Activated B cell treated with CpG ODN at 0.5 μM for 24 hours (primary cell): ENCODE measurements at regions of chr5 and their contacts with region 1.

Region 1: DNA sequence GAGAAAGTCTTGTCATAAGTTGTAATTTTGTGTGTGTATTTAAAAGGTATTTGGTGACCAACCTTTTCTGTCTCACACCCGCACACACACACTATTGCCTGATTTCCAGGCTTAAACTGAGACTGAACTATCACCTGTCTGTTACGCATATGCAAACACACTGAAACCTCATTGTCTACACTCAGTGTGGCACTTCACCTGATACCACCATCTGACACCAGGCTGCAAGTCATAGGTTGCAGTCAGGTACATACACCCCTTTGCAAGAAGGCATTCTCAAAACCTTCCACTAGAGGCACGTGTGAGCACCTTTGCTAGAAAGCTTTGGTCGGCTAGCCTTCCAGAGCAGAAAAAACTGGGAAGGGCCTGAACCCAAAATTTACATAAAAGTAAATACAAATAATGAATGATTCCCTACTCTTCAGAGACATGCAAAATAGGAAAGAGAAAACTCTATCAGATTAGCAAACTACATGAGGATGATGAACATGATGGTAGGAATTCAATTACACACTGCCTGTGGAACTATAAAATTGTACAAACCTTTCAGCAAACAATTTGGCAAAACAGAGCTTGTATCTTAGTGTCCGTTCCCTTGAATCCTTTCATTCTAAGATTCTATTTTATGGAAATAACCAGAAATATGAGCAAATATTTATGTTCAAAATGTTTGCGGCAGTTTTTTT is 5.9 kb upstream of the FOXD1 start:
- DNase-seq: no peak
- ATAC-seq: peak; percentile 42
- H3K4me3 Mint-ChIP-seq: no peak overlapping the region
- H3K27ac Mint-ChIP-seq: no peak overlapping the region
- H3K4me1 Mint-ChIP-seq: peaks cover 4% of the 10 kb centered on the region
- H3K27me3 Mint-ChIP-seq: peaks cover 68% of the 10 kb centered on the region
- CTCF ChIP-seq: peak; percentile 64

Region 2: DNA sequence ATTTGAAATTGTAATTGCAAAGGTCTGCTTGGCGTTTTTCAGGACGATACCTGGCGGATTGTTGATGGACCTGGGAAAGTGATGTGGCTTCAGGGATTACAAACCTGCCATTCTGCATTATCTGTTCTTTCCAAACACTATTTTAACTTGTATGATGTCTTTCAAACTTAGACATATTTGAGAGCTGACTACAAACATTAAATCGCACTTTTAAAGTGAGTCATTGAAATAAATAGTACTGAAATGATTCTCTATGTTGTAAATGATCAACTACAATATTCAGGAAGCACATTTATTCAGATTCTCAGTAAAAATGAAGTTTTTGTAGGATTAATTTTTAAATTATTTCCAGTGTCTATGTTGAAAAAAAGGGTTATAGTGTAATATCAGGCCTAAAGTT is 366.5 kb before region 1 on chr5:
- CTCF ChIA-PET with region 1: no interaction called
- POLR2A ChIA-PET with region 1: no interaction called
- intact Hi-C with region 1: loop called (anchors 10 kb)
- DNase-seq: no peak
- ATAC-seq: no peak
- H3K4me3 Mint-ChIP-seq: no peak overlapping the region
- H3K27ac Mint-ChIP-seq: no peak overlapping the region
- H3K4me1 Mint-ChIP-seq: no peaks in the 10 kb centered on the region
- H3K27me3 Mint-ChIP-seq: no peaks in the 10 kb centered on the region
- CTCF ChIP-seq: no peak

Region 3: GRCh38 chr5:73215891-73216610 is 238.4 kb before region 1 on chr5:
- CTCF ChIA-PET with region 1: no interaction called
- POLR2A ChIA-PET with region 1: no interaction called
- intact Hi-C with region 1: loop called (anchors 10 kb)
- DNase-seq: no peak
- ATAC-seq: peak; percentile 47
- H3K4me3 Mint-ChIP-seq: peak overlapping the region; percentile 61
- H3K27ac Mint-ChIP-seq: no peak overlapping the region
- H3K4me1 Mint-ChIP-seq: peaks cover 9% of the 10 kb centered on the region
- H3K27me3 Mint-ChIP-seq: peaks cover 66% of the 10 kb centered on the region
- CTCF ChIP-seq: no peak